Activated CD4-positive, alpha-beta memory T cell treated with anti-CD3 and anti-CD28 coated beads for 36 hours (primary cell): ENCODE measurements at regions of chrX and their contacts with region 1.

Region 1: GRCh38 chrX:77899081-77899828 is at the start of gene COX7B:
- DNase-seq: peak; percentile 72
- H3K4me3 Mint-ChIP-seq: peak within 1 kb of the TSS; percentile 92
- H3K27ac Mint-ChIP-seq: peak within 1 kb of the TSS; percentile 97
- H3K4me1 Mint-ChIP-seq: peaks cover 18% of the 10 kb centered on the region
- H3K27me3 Mint-ChIP-seq: no peaks in the 10 kb centered on the region
- total RNA-seq, gene COX7B: 295 to 320 TPM

Region 2: DNA sequence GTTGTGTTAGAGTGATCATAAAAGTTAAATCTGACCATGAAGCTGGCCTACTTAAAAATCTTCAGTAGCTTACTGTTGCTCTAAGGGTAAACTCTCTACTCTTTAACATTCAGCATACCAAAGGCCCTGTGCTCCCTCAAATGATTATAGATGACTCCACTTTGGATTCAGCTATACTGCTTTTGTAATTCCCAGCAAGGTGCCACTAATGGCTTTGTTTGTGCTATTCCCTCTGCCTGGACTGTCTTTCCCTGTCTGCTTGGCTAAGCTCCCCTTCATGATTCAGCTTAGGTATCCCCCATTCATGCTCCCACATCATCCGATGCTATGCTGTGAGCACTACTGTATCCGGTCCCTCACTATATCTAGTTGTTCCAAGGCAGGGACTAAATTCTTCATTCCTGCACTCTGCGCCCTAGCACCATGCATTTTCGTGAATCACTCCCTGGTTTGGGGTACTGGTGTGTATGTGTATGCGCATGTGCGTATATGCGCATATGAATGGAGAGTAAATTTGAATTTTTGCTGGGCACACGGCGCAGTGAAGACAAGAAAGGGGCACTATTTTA is 1726.8 kb before region 1 on chrX:
- CTCF ChIA-PET with region 1: no interaction called
- POLR2A ChIA-PET with region 1: no interaction called
- intact Hi-C with region 1: loop called (anchors 10 kb)
- DNase-seq: no peak
- H3K4me3 Mint-ChIP-seq: peak overlapping the region; percentile 89
- H3K27ac Mint-ChIP-seq: peak overlapping the region; percentile 94
- H3K4me1 Mint-ChIP-seq: peaks cover 54% of the 10 kb centered on the region
- H3K27me3 Mint-ChIP-seq: no peaks in the 10 kb centered on the region

Region 3: DNA sequence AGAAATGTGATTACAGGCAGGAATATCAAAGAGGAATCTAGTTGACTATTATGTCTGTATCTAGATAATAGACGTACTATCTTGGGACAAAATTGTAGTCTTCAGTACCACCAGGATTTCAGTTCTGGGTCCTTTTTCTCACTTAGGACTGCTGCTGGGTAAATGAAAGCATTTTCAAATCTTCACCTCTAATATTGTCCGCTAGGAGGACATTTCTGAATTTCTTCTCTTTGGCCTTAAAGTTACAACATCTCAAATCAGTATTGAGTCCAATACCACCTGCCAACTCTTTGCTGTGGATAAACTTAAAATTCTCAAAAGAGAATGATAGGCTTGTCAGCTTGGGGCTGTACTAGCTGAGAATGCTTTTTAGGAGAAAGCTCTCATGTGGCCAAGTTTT is 446.1 kb before region 1 on chrX:
- CTCF ChIA-PET with region 1: no interaction called
- POLR2A ChIA-PET with region 1: no interaction called
- intact Hi-C with region 1: no loop called
- DNase-seq: no peak
- H3K4me3 Mint-ChIP-seq: no peak overlapping the region
- H3K27ac Mint-ChIP-seq: no peak overlapping the region
- H3K4me1 Mint-ChIP-seq: no peaks in the 10 kb centered on the region
- H3K27me3 Mint-ChIP-seq: no peaks in the 10 kb centered on the region

Region 4: DNA sequence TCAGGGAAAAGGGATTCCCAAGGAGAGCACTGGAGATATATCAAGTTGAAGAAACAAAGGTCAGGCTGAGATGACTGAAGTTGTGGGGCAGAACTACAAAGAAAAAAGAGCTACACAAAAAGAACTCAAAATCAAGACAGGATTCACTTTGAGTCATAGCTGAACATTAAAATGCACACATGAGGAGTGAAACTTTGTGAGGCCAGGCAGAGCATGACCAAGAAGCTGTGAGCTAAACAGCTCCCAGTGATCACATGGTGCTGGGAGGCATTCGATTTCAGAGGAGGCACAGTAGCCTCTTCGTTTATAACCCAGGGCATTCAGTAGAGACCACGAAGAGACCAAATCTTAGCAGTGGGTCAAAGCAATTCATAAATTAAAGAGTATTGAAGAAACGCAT is 258.6 kb before region 1 on chrX:
- CTCF ChIA-PET with region 1: no interaction called
- POLR2A ChIA-PET with region 1: no interaction called
- intact Hi-C with region 1: loop called (anchors 5 kb)
- DNase-seq: peak; percentile 39
- H3K4me3 Mint-ChIP-seq: no peak overlapping the region
- H3K27ac Mint-ChIP-seq: peak overlapping the region; percentile 59
- H3K4me1 Mint-ChIP-seq: peaks cover 7% of the 10 kb centered on the region
- H3K27me3 Mint-ChIP-seq: no peaks in the 10 kb centered on the region

Region 5: GRCh38 chrX:77785486-77786364 is 113.5 kb before region 1 on chrX and contains the start of gene ATRX:
- CTCF ChIA-PET with region 1: interaction called, 5 read pairs
- POLR2A ChIA-PET with region 1: no interaction called
- intact Hi-C with region 1: loop called (anchors 1 kb)
- DNase-seq: peak; percentile 82
- H3K4me3 Mint-ChIP-seq: peak within 1 kb of the TSS; percentile 99
- H3K27ac Mint-ChIP-seq: peak within 1 kb of the TSS; percentile 100
- H3K4me1 Mint-ChIP-seq: peaks cover 17% of the 10 kb centered on the region
- H3K27me3 Mint-ChIP-seq: peaks cover 2% of the 10 kb centered on the region
- total RNA-seq, gene ATRX: 56.8 to 60.4 TPM

Region 6: DNA sequence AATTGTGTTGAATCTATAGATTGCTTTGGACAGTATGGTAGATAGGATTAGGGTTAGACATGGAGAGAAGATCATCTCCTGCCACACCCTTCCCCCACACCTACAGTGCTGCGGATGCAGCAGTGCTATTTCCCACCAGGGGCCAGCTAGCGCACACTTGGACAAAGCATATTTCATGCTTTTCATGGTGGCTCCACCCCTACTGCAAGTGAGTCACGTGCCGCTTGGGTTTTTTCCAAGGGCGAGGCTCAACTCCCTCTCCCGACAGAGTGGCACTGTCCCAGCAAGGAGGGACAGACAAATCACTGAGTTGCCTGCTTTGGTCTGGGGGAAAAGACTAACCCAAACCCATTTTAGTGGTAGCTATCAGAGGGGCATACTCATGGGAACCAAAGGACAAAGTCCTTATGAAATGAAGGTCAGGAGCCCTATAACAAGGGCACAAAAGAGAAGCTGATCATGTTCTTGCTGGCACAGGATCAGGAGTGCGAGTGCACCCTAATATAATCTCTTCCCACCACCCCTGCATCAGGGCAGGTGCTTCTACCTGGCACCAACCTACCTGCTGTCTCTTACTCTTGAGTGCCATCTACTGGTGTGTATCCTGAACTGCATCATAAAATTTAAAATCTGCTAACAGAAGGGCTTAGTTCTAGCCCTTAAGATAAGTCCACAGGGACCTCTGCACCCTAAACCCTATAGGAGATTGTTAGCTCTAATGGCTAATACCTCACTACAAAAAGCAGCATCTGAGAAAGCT is 125.3 kb after region 1 on chrX:
- CTCF ChIA-PET with region 1: interaction called, 20 read pairs
- POLR2A ChIA-PET with region 1: interaction called, 3 read pairs
- intact Hi-C with region 1: no loop called
- DNase-seq: peak; percentile 10
- H3K4me3 Mint-ChIP-seq: no peak overlapping the region
- H3K27ac Mint-ChIP-seq: no peak overlapping the region
- H3K4me1 Mint-ChIP-seq: no peaks in the 10 kb centered on the region
- H3K27me3 Mint-ChIP-seq: no peaks in the 10 kb centered on the region

Region 7: GRCh38 chrX:78333521-78333920 is 434.3 kb after region 1 on chrX:
- CTCF ChIA-PET with region 1: no interaction called
- POLR2A ChIA-PET with region 1: no interaction called
- intact Hi-C with region 1: loop called (anchors 5 kb)
- DNase-seq: no peak
- H3K4me3 Mint-ChIP-seq: no peak overlapping the region
- H3K27ac Mint-ChIP-seq: peak overlapping the region; percentile 16
- H3K4me1 Mint-ChIP-seq: peaks cover 62% of the 10 kb centered on the region
- H3K27me3 Mint-ChIP-seq: no peaks in the 10 kb centered on the region